Gastrocnemius medialis (tissue), 4 donors: ENCODE measurements at regions of chr3 and their contacts with region 1.

Region 1: GRCh38 chr3:97952280-97952679 is 20.0 kb downstream of the RIOX2 start:
- DNase-seq: peak; percentile 70 to 88
- ATAC-seq: peak; percentile 96 to 98
- H3K4me3 ChIP-seq: no peak overlapping the region
- H3K27ac ChIP-seq: peak overlapping the region; percentile 68 to 89 (median 86)
- H3K4me1 ChIP-seq: peaks cover 11 to 13% of the 10 kb centered on the region in 2 donors
- H3K27me3 ChIP-seq: no peaks in the 10 kb centered on the region
- CTCF ChIP-seq: no peak
- POLR2A ChIP-seq: no peak

Region 2: DNA sequence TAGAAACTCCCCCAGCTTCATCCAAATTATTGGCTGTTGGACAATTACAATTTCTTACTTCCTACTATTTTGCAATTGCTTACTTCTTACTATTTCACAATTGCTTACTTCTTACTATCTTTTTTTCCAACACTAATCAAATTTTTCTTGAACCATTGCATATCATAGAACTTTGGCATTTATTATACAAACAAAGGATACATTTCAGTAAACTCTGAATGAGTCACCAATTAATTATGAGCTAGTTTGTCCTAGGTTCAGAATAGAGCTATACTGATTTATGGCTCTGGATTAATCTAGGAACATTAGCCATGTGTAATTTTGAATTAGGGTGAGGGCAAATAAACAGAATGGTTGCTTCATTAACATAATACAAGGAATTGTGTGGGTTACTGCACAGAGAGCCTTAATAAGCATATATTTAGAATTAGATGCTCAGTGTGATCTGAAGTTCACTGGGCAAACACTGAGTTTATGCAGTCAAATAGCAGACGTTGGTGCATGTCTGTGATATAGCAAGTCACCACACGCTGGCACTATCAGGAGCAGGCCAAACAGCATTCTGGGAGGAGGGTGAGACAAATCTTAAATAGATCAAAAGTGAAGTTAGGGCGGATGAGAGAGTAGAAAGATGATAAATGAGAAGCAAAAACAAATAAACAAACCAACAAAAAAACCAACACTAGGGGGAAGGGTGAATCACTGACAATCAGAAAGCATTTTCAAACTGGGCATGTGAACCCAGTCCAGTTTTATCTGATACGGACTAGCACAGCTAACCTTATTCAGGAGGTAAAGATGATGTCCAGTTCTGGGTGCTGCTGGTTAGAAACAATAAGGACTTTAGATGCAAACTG is 61.4 kb after region 1 on chr3:
- in situ Hi-C with region 1: loop called in 1 of 4 experiments (anchors 10 kb)
- intact Hi-C with region 1: no loop called
- DNase-seq: no peak
- ATAC-seq: no peak
- H3K4me3 ChIP-seq: no peak overlapping the region
- H3K27ac ChIP-seq: no peak overlapping the region
- H3K4me1 ChIP-seq: no peaks in the 10 kb centered on the region
- H3K27me3 ChIP-seq: no peaks in the 10 kb centered on the region
- CTCF ChIP-seq: no peak
- POLR2A ChIP-seq: no peak